IMR-90 (cell line): ENCODE measurements at regions of chr9 and their contacts with region 1.

Region 1: GRCh38 chr9:131277910-131278701 is 1.8 kb upstream of the FAM78A start:
- DNase-seq: peak; percentile 78
- ATAC-seq: peak; percentile 93
- H3K4me3 ChIP-seq: peak overlapping the region; percentile 66
- H3K27ac ChIP-seq: no peak overlapping the region
- H3K4me1 ChIP-seq: no peaks in the 10 kb centered on the region
- H3K27me3 ChIP-seq: peaks cover 64% of the 10 kb centered on the region
- CTCF ChIP-seq: no peak
- POLR2A ChIP-seq: no peak
- RAD21 ChIP-seq: no peak

Region 2: DNA sequence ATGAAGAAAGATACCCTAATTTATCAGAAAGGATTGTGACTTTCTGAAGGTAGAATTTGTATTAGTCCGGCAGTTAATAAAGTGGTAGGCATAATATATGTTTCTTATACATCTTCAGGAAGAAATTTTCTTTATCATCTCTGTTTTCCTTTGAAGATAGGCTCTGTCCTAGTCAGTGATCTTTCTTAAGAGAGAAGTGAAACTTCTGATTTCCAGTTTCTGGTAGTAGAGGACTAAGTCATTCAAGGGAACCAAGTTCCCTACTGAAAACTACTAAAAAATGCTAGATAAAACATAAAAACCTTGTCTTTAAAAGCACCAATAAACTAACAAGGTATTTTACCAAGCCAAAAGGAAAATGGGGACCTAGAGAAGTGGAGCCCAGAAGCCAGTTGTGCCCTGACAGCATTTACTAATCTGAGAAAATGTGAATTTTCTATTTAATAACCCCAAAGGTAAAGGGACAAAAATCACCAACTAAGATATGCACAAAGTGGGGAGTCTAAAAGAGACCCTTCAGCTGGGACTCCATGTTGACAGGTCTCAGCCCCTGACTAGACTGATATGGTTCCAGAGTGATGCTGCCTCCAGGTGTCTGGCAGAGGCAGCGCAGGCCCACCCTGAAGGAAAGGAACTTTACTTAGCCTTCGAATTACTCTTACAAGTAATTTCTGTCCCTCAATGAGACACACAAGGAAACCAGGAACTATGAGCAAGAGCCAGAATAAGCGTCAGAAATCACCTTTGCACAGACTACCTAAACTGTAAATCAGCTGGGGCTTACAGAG is 74.5 kb before region 1 on chr9:
- CTCF ChIA-PET with region 1: no interaction called
- POLR2A ChIA-PET with region 1: no interaction called
- dilution Hi-C with region 1: no loop called
- in situ Hi-C with region 1: no loop called
- intact Hi-C with region 1: loop called (anchors 2 kb)
- DNase-seq: no peak
- ATAC-seq: no peak
- H3K4me3 ChIP-seq: no peak overlapping the region
- H3K27ac ChIP-seq: no peak overlapping the region
- H3K4me1 ChIP-seq: no peaks in the 10 kb centered on the region
- H3K27me3 ChIP-seq: no peaks in the 10 kb centered on the region
- CTCF ChIP-seq: peak; percentile 25; the same call in 1 of the 2 replicates
- POLR2A ChIP-seq: no peak
- RAD21 ChIP-seq: 0 out of 2 replicates have a peak, but pooled peaks have one; percentile 20

Region 3: GRCh38 chr9:131289301-131290038 is 11.4 kb after region 1 on chr9 and contains the start of gene PLPP7:
- CTCF ChIA-PET with region 1: no interaction called
- POLR2A ChIA-PET with region 1: no interaction called
- dilution Hi-C with region 1: no loop called
- in situ Hi-C with region 1: no loop called
- intact Hi-C with region 1: loop called (anchors 1 kb)
- DNase-seq: peak; percentile 48
- ATAC-seq: peak; percentile 98
- H3K4me3 ChIP-seq: peak within 1 kb of the TSS; percentile 29; the same call in 1 of the 2 replicates
- H3K27ac ChIP-seq: no peak within 1 kb of the TSS
- H3K4me1 ChIP-seq: no peaks in the 10 kb centered on the region
- H3K27me3 ChIP-seq: peaks cover 8% of the 10 kb centered on the region
- CTCF ChIP-seq: no peak
- POLR2A ChIP-seq: no peak
- RAD21 ChIP-seq: no peak
- total RNA-seq, gene PLPP7: 0.54 and 0.56 TPM in 2 replicates